CD8-positive, alpha-beta T cell (primary cell): ENCODE measurements at regions of chr11 and their contacts with region 1.

Region 1: GRCh38 chr11:36509694-36510566 is at the start of gene TRAF6:
- DNase-seq: peak; percentile 74 to 95 (median 91)
- ATAC-seq: peak; percentile 95
- H3K4me3 ChIP-seq: peak within 1 kb of the TSS; percentile 84 to 97
- H3K4me3 Mint-ChIP-seq: peak within 1 kb of the TSS; percentile 92
- H3K27ac ChIP-seq: peak within 1 kb of the TSS; percentile 74 to 83
- H3K27ac Mint-ChIP-seq: peak within 1 kb of the TSS; percentile 92
- H3K4me1 ChIP-seq: peaks cover 16% of the 10 kb centered on the region
- H3K4me1 Mint-ChIP-seq: peaks cover 37% of the 10 kb centered on the region
- H3K27me3 ChIP-seq: no peaks in the 10 kb centered on the region
- H3K27me3 Mint-ChIP-seq: peaks cover 5% of the 10 kb centered on the region
- CTCF ChIP-seq: peak; percentile 84
- total RNA-seq, gene TRAF6: 29.7 to 31.3 TPM

Region 2: DNA sequence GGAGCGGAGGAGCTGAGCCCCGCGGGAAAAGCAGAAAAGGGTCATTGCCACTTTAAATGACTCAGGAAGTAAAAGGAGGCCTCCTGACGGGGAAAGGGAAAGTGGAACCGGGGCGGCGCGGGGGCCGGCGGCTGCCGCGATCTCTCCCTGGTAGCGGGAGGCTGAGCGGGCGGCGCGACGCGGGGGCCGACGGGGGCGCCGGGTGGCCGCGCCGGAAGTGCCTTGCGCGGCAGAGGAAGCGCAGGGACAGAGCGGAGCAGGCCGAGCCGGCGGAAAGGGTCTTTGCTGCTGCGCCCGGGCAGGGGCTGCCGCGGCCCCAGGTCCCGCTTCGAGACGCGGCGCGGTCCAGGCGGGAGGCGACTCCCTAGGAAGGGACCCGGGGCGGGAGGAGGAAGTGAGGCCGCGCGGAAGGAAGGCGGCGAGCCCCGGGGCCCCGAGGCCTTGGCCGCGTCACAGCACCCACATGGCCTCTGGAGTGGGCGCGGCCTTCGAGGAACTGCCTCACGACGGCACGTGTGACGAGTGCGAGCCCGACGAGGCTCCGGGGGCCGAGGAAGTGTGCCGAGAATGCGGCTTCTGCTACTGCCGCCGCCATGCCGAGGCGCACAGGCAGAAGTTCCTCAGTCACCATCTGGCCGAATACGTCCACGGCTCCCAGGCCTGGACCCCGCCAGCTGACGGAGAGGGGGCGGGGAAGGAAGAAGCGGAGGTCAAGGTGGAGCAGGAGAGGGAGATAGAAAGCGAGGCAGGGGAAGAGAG is 847.1 kb before region 1 on chr11 and contains the start of gene TRIM44:
- CTCF ChIA-PET with region 1: no interaction called
- POLR2A ChIA-PET with region 1: no interaction called
- intact Hi-C with region 1: loop called (anchors 1 kb)
- DNase-seq: peak; percentile 57 to 89 (median 79)
- ATAC-seq: peak; percentile 81
- H3K4me3 ChIP-seq: peak within 1 kb of the TSS; percentile 91 to 97
- H3K4me3 Mint-ChIP-seq: peak within 1 kb of the TSS; percentile 96
- H3K27ac ChIP-seq: peak within 1 kb of the TSS; percentile 84 to 85
- H3K27ac Mint-ChIP-seq: peak within 1 kb of the TSS; percentile 97
- H3K4me1 ChIP-seq: peaks cover 23% of the 10 kb centered on the region
- H3K4me1 Mint-ChIP-seq: peaks cover 47% of the 10 kb centered on the region
- H3K27me3 ChIP-seq: peaks cover 0 to 4% of the 10 kb centered on the region in 2 experiments
- H3K27me3 Mint-ChIP-seq: no peaks in the 10 kb centered on the region
- CTCF ChIP-seq: no peak
- total RNA-seq, gene TRIM44: 25.7 to 29.5 TPM

Region 3: DNA sequence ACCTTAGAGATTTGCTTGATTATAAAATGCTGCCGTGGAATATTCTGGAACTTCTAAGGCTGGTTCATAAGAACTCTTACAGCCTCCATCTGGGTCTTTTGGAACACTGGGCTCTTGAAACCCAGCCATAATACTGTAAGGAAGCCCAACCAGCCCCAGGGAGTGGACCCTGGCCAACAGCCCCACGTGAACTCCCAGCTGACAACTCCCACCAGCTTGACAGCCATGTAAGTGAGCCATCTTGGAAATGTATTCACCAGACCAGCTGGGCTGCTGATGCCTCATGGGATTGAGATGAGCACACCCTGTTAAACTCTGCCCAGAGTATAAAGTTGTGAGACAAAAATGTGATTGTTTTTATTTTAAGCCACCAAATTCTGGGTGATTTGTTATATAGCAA is 466.8 kb after region 1 on chr11:
- CTCF ChIA-PET with region 1: no interaction called
- POLR2A ChIA-PET with region 1: no interaction called
- intact Hi-C with region 1: no loop called
- DNase-seq: no peak
- ATAC-seq: no peak
- H3K4me3 ChIP-seq: no peak overlapping the region
- H3K4me3 Mint-ChIP-seq: no peak overlapping the region
- H3K27ac ChIP-seq: no peak overlapping the region
- H3K27ac Mint-ChIP-seq: no peak overlapping the region
- H3K4me1 ChIP-seq: no peaks in the 10 kb centered on the region
- H3K4me1 Mint-ChIP-seq: no peaks in the 10 kb centered on the region
- H3K27me3 ChIP-seq: no peaks in the 10 kb centered on the region
- H3K27me3 Mint-ChIP-seq: no peaks in the 10 kb centered on the region
- CTCF ChIP-seq: no peak